HCT116 (cell line): ENCODE measurements at regions of chr5 and their contacts with region 1.

Region 1: DNA sequence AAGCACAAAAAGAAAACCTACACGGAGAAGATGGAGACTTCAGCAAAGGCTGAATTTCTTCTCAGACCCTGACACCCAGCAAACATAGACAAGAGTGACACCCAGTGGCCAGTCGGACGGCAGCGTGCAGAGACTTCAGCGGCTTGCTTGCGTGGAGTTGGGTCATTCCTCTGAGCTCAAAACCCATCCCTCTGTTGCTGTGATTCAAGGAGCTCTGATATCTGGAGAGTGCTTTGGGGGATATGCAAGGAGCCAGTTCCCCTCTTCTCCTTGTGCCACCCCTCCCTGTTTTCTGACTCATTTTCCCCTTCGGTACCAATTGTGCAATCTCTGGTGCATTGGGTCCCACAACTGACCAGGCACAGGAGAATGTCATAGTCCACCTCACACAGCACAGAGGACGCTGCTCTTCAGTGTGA is 27.5 kb downstream of the SH3TC2 start:
- DNase-seq: peak; percentile 48
- ATAC-seq: peak; percentile 96
- H3K4me3 ChIP-seq: no peak overlapping the region
- H3K27ac ChIP-seq: no peak overlapping the region
- H3K4me1 ChIP-seq: peaks cover 0 to 14% of the 10 kb centered on the region in 2 experiments; a peak in 1 of 4 replicates
- H3K27me3 ChIP-seq: no peaks in the 10 kb centered on the region
- CTCF ChIP-seq: peak; percentile 89 to 92 (median 90)
- POLR2A ChIP-seq: no peak
- RAD21 ChIP-seq: peak; percentile 96

Region 2: DNA sequence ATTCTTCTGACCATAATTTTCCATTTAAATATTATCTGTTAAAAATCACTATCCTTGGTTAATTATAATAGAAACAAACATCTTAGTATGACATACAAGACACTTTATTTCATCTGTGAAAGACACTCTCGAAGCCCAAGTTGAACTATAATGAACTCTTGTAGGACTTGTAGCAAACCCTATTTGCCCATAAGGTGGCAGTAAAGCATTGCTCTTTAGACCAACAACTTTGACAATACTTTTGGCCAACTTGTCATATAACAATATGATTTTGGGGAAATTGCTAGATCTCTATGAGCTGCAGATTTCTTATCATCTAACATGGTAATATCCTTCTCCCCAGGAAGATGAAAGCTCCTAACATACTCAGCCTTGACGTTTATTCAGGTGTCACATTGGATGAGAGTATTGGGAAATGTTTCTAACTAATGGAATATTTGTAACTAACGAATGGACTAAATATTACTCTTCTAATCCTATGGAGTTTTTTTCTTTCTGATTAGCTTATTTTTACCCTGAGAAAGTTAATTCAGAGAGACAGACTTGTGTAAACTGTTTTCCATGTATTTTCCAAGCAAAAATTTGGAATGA is 856.1 kb before region 1 on chr5:
- CTCF ChIA-PET with region 1: no interaction called
- POLR2A ChIA-PET with region 1: no interaction called
- RAD21 ChIA-PET with region 1: no interaction called
- intact Hi-C with region 1: loop called (anchors 2 kb)
- DNase-seq: peak; percentile 48
- ATAC-seq: peak; percentile 78
- H3K4me3 ChIP-seq: no peak overlapping the region
- H3K27ac ChIP-seq: no peak overlapping the region
- H3K4me1 ChIP-seq: no peaks in the 10 kb centered on the region
- H3K27me3 ChIP-seq: no peaks in the 10 kb centered on the region
- CTCF ChIP-seq: peak; percentile 62 to 76 (median 72)
- POLR2A ChIP-seq: no peak
- RAD21 ChIP-seq: peak; percentile 84

Region 3: DNA sequence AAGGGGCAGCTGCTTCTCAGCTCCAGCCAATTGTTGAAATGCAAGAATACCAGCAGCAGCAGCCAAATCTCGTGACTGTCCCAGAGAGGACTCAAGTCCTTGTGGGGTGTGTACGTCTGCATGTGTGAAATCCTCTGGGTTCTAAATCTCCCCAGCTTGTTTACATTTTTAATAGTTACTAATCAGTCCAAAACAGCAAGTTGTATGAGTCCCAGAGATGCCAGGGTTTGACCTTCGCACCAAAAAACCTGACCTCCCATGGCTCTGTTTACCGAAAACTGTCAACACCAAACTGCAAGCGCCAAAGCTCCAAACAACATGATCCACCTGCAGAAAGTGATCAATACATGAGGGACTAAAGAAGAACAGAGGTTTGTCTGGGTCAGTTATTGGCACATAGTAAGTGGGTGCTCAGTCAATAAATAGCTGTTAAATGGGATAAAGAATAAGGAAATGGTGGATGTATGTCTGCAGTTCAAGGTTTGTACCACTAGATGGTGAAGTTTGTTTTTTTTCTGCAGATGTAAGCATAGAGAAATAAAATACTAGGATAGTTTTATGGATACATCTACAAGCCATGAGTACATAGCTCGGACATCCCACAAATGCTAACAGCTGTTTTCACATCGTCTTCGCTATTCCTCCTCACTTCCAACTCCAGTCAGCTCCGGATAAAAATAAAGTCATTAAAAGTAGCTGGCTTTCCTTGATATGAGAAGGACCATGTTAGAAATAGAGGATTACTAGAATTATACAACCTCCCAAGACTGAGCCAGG is 294.2 kb before region 1 on chr5:
- CTCF ChIA-PET with region 1: interaction called, 128 read pairs
- POLR2A ChIA-PET with region 1: no interaction called
- RAD21 ChIA-PET with region 1: interaction called, 8 to 9 read pairs
- intact Hi-C with region 1: loop called (anchors 1 kb)
- DNase-seq: peak; percentile 54
- ATAC-seq: peak; percentile 78
- H3K4me3 ChIP-seq: no peak overlapping the region
- H3K27ac ChIP-seq: no peak overlapping the region
- H3K4me1 ChIP-seq: no peaks in the 10 kb centered on the region
- H3K27me3 ChIP-seq: no peaks in the 10 kb centered on the region
- CTCF ChIP-seq: peak; percentile 63 to 83 (median 76)
- POLR2A ChIP-seq: no peak
- RAD21 ChIP-seq: peak; percentile 89

Region 4: GRCh38 chr5:148826053-148826738 is 209.2 kb before region 1 on chr5 and contains the start of gene ADRB2:
- CTCF ChIA-PET with region 1: interaction called, 14 read pairs
- POLR2A ChIA-PET with region 1: no interaction called
- RAD21 ChIA-PET with region 1: no interaction called
- intact Hi-C with region 1: loop called (anchors 10 kb)
- DNase-seq: peak; percentile 74
- ATAC-seq: peak; percentile 97
- H3K4me3 ChIP-seq: peak within 1 kb of the TSS; percentile 58 to 60
- H3K27ac ChIP-seq: no peak within 1 kb of the TSS; the same call in 1 of the 2 replicates
- H3K4me1 ChIP-seq: peaks cover 5 to 14% of the 10 kb centered on the region in 2 experiments; a peak in 2 of 4 replicates
- H3K27me3 ChIP-seq: no peaks in the 10 kb centered on the region
- CTCF ChIP-seq: no peak; a peak in 1 of 6 replicates
- POLR2A ChIP-seq: no peak
- RAD21 ChIP-seq: no peak
- total RNA-seq, gene ADRB2: 0.25 TPM

Region 5: DNA sequence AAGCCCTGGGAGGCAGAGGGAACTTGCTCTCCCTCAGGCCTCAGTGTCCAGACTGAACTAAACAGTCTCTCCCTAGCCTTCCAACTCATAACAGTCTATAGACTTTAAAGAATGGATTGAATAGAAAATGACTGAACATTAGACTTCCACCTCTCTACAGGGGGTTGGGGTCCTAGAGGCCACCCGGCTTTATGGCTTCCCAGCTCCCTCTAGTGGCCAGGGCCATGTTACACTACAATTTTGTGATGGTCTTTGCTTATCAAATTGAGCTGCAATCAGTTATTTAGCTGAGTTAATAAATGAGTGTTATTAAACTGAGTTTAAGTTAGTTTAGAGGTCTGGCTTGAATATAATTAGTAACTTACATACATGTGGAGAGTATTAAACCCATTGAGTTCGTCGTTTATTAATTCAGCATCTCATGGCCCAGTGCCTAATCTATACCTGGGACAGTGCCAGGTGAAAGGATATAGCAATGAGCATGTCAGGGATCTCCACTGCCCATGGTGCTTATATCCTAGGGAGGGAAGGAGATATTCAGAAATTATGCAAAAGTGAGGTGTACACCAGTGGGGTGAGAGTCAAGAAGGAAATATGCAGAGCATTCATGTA is 77.7 kb before region 1 on chr5:
- CTCF ChIA-PET with region 1: interaction called, 10 read pairs
- POLR2A ChIA-PET with region 1: no interaction called
- RAD21 ChIA-PET with region 1: interaction called, 4 to 5 read pairs
- intact Hi-C with region 1: no loop called
- DNase-seq: no peak
- ATAC-seq: peak; percentile 76
- H3K4me3 ChIP-seq: no peak overlapping the region
- H3K27ac ChIP-seq: no peak overlapping the region
- H3K4me1 ChIP-seq: peaks cover 0 to 7% of the 10 kb centered on the region in 2 experiments; a peak in 1 of 4 replicates
- H3K27me3 ChIP-seq: no peaks in the 10 kb centered on the region
- CTCF ChIP-seq: peak; percentile 84 to 97 (median 90)
- POLR2A ChIP-seq: no peak
- RAD21 ChIP-seq: peak; percentile 83

Region 6: GRCh38 chr5:149268928-149269557 is 233.7 kb after region 1 on chr5:
- CTCF ChIA-PET with region 1: no interaction called
- POLR2A ChIA-PET with region 1: no interaction called
- RAD21 ChIA-PET with region 1: no interaction called
- intact Hi-C with region 1: loop called (anchors 2 kb)
- DNase-seq: peak; percentile 55
- ATAC-seq: peak; percentile 26
- H3K4me3 ChIP-seq: no peak overlapping the region
- H3K27ac ChIP-seq: no peak overlapping the region
- H3K4me1 ChIP-seq: peaks cover 0 to 8% of the 10 kb centered on the region in 2 experiments; a peak in 2 of 4 replicates
- H3K27me3 ChIP-seq: no peaks in the 10 kb centered on the region
- CTCF ChIP-seq: peak; percentile 55 to 82 (median 69)
- POLR2A ChIP-seq: no peak
- RAD21 ChIP-seq: peak; percentile 82

Region 7: GRCh38 chr5:149765932-149766331 is 730.6 kb after region 1 on chr5:
- CTCF ChIA-PET with region 1: no interaction called
- POLR2A ChIA-PET with region 1: no interaction called
- RAD21 ChIA-PET with region 1: no interaction called
- intact Hi-C with region 1: no loop called
- DNase-seq: peak; percentile 19
- ATAC-seq: no peak
- H3K4me3 ChIP-seq: no peak overlapping the region
- H3K27ac ChIP-seq: no peak overlapping the region
- H3K4me1 ChIP-seq: no peaks in the 10 kb centered on the region
- H3K27me3 ChIP-seq: no peaks in the 10 kb centered on the region
- CTCF ChIP-seq: peak; percentile 28 to 74 (median 56); a peak in 5 of 6 replicates
- POLR2A ChIP-seq: no peak
- RAD21 ChIP-seq: peak; percentile 33; the same call in 1 of the 2 replicates